T-cell (primary cell): ENCODE measurements at regions of chrX and their contacts with region 1.

Region 1: DNA sequence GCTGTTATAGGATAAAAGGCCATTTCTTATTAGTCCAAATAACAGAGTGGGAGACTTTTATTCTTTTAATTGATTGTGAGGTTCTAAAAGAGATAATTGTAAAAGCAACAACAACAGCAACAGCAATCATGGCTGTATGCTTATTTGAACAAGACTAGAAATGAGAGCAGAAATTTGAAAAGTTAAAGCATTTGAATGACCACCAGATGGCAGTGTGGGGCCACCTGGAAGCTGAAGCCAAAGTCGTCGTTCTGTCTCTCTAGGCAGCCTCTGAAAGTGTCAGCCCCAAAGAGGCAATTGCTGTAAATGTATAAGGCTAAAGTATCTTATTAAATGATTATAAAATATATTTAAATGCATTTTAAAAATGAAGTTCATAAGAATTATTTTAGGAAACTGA is 42.2 kb downstream of the SH2D1A start:
- DNase-seq: peak; percentile 3 to 80 (median 39)
- ATAC-seq: peak; percentile 45 to 68 (median 57)
- H3K4me3 ChIP-seq: no peak overlapping the region
- H3K4me3 Mint-ChIP-seq: no peak overlapping the region
- H3K27ac ChIP-seq: no peak overlapping the region
- H3K27ac Mint-ChIP-seq: no peak overlapping the region
- H3K4me1 ChIP-seq: peaks cover 0 to 20% of the 10 kb centered on the region in 2 experiments
- H3K4me1 Mint-ChIP-seq: peaks cover 6 to 21% (median 16%) of the 10 kb centered on the region in 3 donors
- H3K27me3 ChIP-seq: no peaks in the 10 kb centered on the region
- H3K27me3 Mint-ChIP-seq: peaks cover 0 to 11% of the 10 kb centered on the region in 2 donors

Region 2: DNA sequence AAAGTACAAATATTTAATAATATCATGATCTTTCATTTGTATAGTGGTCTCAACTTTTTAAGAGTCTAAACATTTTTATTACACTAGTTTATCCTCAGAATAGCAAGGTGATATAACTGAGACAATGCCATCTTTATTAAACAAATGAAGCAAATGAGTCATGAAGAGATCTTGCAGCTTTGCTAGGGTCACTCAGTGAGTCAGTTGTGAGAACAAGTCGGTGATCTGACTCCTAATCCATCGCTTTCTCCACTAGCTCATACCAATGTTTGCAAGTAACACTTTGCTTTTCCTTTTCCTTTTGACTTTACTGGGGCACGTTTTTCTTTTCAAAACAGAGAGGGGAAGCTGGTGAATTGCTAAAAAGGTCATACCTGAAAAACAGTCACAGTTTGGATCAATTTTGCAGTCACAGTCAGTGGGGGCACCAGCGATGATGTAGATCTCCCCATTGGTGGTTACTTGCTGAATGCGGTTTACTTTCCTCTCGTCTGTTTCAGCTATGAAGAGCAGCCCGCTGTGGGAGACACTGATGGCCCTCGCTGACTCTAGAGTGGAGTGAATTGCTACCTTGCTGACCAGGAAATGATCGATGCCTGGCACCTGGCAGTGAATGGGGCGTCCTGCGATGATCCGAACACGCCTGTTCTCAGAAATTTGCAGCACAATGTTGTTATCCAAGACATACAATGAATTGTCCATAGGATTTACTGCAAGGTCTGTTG is 33.5 kb after region 1 on chrX:
- CTCF ChIA-PET with region 1: no interaction called
- POLR2A ChIA-PET with region 1: interaction called in 1 of 2 experiments, 10 read pairs
- DNase-seq: no peak
- ATAC-seq: no peak
- H3K4me3 ChIP-seq: no peak overlapping the region
- H3K4me3 Mint-ChIP-seq: no peak overlapping the region
- H3K27ac ChIP-seq: no peak overlapping the region
- H3K27ac Mint-ChIP-seq: no peak overlapping the region
- H3K4me1 ChIP-seq: no peaks in the 10 kb centered on the region
- H3K4me1 Mint-ChIP-seq: no peaks in the 10 kb centered on the region
- H3K27me3 ChIP-seq: no peaks in the 10 kb centered on the region
- H3K27me3 Mint-ChIP-seq: peaks cover 0 to 5% of the 10 kb centered on the region in 2 donors